ENCODE measurements at regions of chr19 and their contacts with region 1.

Region 1: GRCh38 chr19:10864538-10864899 is 6.8 kb upstream of the CARM1 start:
- DNase-seq: peak; percentile 65 to 95
- ATAC-seq: peak; percentile 96 to 97
- H3K4me3 ChIP-seq: no peak overlapping the region
- H3K27ac ChIP-seq: peak overlapping the region in 1 of 2 experiments; percentile 76; a peak in 3 of 6 replicates
- H3K4me1 ChIP-seq: no peaks in the 10 kb centered on the region
- CTCF ChIP-seq: peak; percentile 71
- EP300 ChIP-seq: no peak
- POLR2A ChIP-seq: no peak
- RAD21 ChIP-seq: peak; percentile 42 to 55; a peak in 3 of 5 replicates

Region 2: DNA sequence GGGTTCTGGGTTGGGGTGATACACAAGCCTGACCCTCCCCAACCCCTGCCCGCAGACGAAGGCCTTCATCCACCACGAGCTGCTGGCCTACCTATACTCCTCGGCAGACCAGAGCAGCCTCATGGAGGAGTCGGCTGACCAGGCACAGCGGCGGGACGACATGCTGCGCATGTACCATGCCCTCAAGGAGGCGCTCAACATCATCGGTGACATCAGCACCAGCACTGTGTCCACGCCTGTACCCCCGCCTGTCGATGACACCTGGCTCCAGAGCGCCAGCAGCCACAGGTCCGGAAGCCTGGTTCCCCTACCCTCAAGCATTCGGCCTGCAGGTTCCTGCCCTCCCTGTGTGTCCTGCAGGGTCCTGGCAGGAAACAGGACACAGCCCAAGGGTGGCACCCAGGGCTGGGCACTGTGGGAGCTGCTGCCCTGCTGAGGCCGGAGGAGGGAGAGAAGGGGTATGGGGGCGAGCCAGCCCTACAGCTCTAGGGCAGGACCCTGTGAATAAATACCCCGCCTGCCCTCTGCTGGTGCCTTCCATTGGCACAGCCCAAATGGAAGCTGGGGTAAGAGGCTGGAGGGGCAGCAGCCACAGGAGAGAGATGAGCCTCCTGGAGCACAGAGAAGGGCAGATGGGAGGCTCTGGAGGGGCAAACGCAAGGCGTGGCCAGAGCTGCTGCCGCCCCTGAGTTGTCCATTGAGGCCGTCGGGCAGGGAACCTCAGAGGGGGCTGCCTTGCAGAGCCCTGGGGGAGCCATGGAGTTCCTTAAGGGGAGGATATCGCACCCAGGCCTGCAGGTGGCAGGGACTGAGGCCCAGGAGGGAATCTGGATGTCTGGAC is 35.3 kb before region 1 on chr19:
- CTCF ChIA-PET with region 1: interaction called, 65 read pairs
- POLR2A ChIA-PET with region 1: no interaction called
- DNase-seq: no peak
- ATAC-seq: peak; percentile 67 to 76
- H3K4me3 ChIP-seq: no peak overlapping the region
- H3K27ac ChIP-seq: no peak overlapping the region
- H3K4me1 ChIP-seq: no peaks in the 10 kb centered on the region
- CTCF ChIP-seq: peak; percentile 15; the same call in 1 of the 3 replicates
- EP300 ChIP-seq: no peak
- POLR2A ChIP-seq: no peak
- RAD21 ChIP-seq: peak in 1 of 2 experiments; percentile 34; a peak in 2 of 5 replicates

Region 3: GRCh38 chr19:10835754-10836477 is 28.6 kb before region 1 on chr19 and contains the start of gene TMED1:
- CTCF ChIA-PET with region 1: interaction called, 65 read pairs
- POLR2A ChIA-PET with region 1: interaction called, 8 read pairs
- DNase-seq: peak; percentile 91 to 99
- ATAC-seq: peak; percentile 94 to 96
- H3K4me3 ChIP-seq: peak within 1 kb of the TSS; percentile 51
- H3K27ac ChIP-seq: peak within 1 kb of the TSS; percentile 89 to 99
- H3K4me1 ChIP-seq: peaks cover 8% of the 10 kb centered on the region; the same call in 2 of the 3 replicates
- CTCF ChIP-seq: no peak
- EP300 ChIP-seq: no peak
- POLR2A ChIP-seq: peak; percentile 46
- RAD21 ChIP-seq: peak in 1 of 2 experiments; percentile 15; a peak in 1 of 5 replicates
- polyA plus RNA-seq, gene TMED1: 29.3 and 29.9 TPM in 2 replicates

Region 4: DNA sequence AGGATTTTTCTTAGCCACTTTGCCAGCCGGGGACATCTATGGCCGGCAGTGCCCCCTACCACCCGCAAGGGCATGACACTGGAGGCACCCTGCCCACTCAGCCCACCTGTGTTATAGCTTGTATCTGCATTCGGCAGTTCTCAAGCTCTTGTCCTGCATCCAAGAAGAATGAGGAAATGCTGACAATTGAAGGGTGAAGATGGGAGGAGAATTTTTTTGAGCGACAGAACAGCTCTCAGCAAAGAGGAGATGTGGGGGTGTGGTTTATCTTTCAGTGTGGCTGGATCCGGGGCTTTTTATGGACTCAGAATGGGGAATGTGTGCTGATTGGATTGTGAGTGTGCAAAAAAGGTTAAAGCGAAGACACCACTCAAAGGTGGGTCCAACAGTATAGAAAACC is 21.7 kb before region 1 on chr19:
- CTCF ChIA-PET with region 1: interaction called, 65 read pairs
- POLR2A ChIA-PET with region 1: no interaction called
- DNase-seq: no peak
- ATAC-seq: no peak
- H3K4me3 ChIP-seq: no peak overlapping the region
- H3K27ac ChIP-seq: no peak overlapping the region
- H3K4me1 ChIP-seq: no peaks in the 10 kb centered on the region
- CTCF ChIP-seq: no peak
- EP300 ChIP-seq: no peak
- POLR2A ChIP-seq: no peak
- RAD21 ChIP-seq: no peak

Region 5: DNA sequence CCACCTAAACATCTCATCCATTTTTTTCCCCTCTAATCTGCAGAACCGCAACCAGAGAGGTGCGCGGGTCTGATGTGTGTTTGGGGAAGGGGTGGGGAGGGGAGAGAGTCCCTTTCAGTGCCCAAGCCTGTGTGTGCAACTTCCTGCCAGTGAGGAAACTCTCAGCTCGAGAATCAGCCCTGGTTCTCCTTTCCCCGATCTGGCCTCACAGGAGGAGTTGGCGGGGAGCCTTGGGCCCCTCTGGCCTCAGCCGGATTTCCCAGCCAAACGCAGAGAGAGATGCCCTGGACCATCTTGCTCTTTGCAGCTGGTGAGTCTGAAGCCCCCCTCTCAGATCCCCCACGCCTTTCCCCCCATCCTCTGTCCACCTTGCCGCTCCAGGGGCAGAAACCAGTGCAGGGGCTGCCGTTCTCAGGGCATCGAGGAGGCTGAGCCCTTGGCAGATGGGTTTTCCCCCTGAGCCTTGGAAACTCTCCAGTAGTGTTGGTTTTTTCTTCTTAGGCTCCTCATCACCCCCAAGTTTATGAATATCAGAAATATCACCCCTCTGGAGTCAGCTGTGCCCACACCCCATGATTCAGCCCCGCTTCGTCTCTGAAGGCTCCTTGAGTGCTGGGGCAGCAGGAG is 16.2 kb before region 1 on chr19 and contains the start of gene C19orf38:
- CTCF ChIA-PET with region 1: interaction called, 34 read pairs
- POLR2A ChIA-PET with region 1: no interaction called
- DNase-seq: no peak
- ATAC-seq: no peak
- H3K4me3 ChIP-seq: no peak within 1 kb of the TSS
- H3K27ac ChIP-seq: no peak within 1 kb of the TSS
- H3K4me1 ChIP-seq: no peaks in the 10 kb centered on the region
- CTCF ChIP-seq: no peak
- EP300 ChIP-seq: no peak
- POLR2A ChIP-seq: no peak
- RAD21 ChIP-seq: no peak
- polyA plus RNA-seq, gene C19orf38: 0.13 and 0.40 TPM in 2 replicates

Region 6: GRCh38 chr19:10888421-10888866 is 23.9 kb after region 1 on chr19:
- CTCF ChIA-PET with region 1: interaction called, 11 read pairs
- POLR2A ChIA-PET with region 1: no interaction called
- DNase-seq: no peak
- ATAC-seq: no peak
- H3K4me3 ChIP-seq: no peak overlapping the region
- H3K27ac ChIP-seq: no peak overlapping the region
- H3K4me1 ChIP-seq: no peaks in the 10 kb centered on the region
- CTCF ChIP-seq: no peak
- EP300 ChIP-seq: no peak
- POLR2A ChIP-seq: no peak
- RAD21 ChIP-seq: no peak